CD4-positive, alpha-beta T cell (primary cell): ENCODE measurements at regions of chr1 and their contacts with region 1.

Region 1: DNA sequence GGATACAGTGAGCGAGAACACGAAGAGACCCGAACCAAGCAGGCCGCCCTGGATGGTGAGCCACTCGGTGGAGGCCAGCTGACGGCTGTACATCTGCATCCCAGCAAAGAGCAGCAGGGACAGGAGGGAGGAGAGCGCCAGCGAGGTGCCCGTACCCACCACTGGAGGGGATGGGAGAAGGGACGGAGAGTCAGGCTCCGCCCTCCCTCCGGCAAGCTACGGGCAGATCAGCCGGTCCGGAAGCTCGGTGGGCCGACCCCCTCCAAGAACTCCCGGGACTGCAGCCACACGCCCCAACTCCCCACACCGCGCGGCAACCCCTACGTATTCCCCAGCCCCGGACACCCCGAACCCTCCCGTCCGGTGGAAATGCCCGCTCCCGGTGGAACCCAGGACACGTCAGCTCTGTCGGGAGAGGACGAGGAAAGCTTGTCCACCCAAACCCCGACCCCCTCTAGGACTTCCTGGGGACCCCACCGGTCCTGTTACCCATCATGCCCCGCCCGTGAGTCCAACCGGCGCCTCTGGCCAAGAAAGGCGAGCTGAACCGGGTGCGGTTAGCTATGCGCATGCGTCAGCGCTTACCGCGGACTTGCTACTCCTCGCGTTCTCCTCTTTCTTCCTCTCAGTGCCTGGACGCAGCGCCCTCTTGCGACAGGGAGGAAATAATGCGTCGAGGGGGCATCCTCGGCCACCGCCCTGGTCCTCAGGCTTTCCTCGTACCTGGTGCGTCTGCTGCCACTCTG is at the start of gene KRTCAP2:
- DNase-seq: peak; percentile 90 to 97 (median 92)
- ATAC-seq: peak; percentile 80
- H3K4me3 ChIP-seq: peak within 1 kb of the TSS; percentile 77
- H3K4me3 Mint-ChIP-seq: peak within 1 kb of the TSS; percentile 100
- H3K27ac ChIP-seq: peak within 1 kb of the TSS; percentile 89 to 91
- H3K27ac Mint-ChIP-seq: peak within 1 kb of the TSS; percentile 95
- H3K4me1 ChIP-seq: peaks cover 58% of the 10 kb centered on the region
- H3K4me1 Mint-ChIP-seq: peaks cover 55% of the 10 kb centered on the region
- H3K27me3 ChIP-seq: no peaks in the 10 kb centered on the region
- H3K27me3 Mint-ChIP-seq: no peaks in the 10 kb centered on the region
- CTCF ChIP-seq: peak; percentile 84
- total RNA-seq, gene KRTCAP2: 77.8 TPM

Region 2: GRCh38 chr1:154992721-154993571 is 180.0 kb before region 1 on chr1:
- CTCF ChIA-PET with region 1: no interaction called
- POLR2A ChIA-PET with region 1: no interaction called
- intact Hi-C with region 1: no loop called
- DNase-seq: no peak
- ATAC-seq: no peak
- H3K4me3 ChIP-seq: no peak overlapping the region
- H3K4me3 Mint-ChIP-seq: no peak overlapping the region
- H3K27ac ChIP-seq: no peak overlapping the region
- H3K27ac Mint-ChIP-seq: no peak overlapping the region
- H3K4me1 ChIP-seq: peaks cover 33% of the 10 kb centered on the region
- H3K4me1 Mint-ChIP-seq: peaks cover 33% of the 10 kb centered on the region
- H3K27me3 ChIP-seq: no peaks in the 10 kb centered on the region
- H3K27me3 Mint-ChIP-seq: no peaks in the 10 kb centered on the region
- CTCF ChIP-seq: no peak

Region 3: DNA sequence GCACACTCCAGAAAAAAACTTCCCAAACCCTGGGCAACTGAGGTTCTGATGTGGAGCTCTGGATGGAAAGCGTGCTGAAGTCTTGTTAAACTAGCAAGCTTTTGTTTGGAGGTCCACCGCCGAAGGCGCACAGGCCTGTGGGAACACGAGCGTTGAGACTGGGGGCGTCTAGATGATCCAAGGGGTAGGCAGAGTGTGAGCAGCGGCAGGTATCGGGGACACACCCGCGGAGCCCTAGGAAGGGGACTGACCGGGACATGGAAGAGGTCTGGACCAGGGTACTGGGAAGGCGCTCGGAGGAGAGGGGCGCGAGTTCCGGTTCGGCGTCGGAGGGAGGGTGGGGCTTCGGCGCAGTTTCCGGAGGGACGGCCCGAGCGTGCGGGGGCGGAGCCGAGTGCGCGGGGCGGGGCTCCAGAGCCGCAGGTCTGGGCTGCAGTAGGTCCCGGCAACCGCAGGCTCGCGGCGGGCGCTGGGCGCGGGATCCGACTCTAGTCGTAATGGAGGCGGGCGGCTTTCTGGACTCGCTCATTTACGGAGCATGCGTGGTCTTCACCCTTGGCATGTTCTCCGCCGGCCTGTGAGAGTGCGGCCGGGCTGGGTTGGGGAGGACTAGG is 37.4 kb before region 1 on chr1 and contains the start of gene SLC50A1:
- CTCF ChIA-PET with region 1: interaction called, 7 read pairs
- POLR2A ChIA-PET with region 1: interaction called, 7 read pairs
- intact Hi-C with region 1: loop called in 1 of 2 experiments (anchors 1 kb)
- DNase-seq: peak; percentile 83 to 97 (median 89)
- ATAC-seq: peak; percentile 85
- H3K4me3 ChIP-seq: peak within 1 kb of the TSS; percentile 97
- H3K4me3 Mint-ChIP-seq: peak within 1 kb of the TSS; percentile 95
- H3K27ac ChIP-seq: peak within 1 kb of the TSS; percentile 98 to 99
- H3K27ac Mint-ChIP-seq: peak within 1 kb of the TSS; percentile 98
- H3K4me1 ChIP-seq: peaks cover 47% of the 10 kb centered on the region
- H3K4me1 Mint-ChIP-seq: peaks cover 54% of the 10 kb centered on the region
- H3K27me3 ChIP-seq: no peaks in the 10 kb centered on the region
- H3K27me3 Mint-ChIP-seq: peaks cover 3% of the 10 kb centered on the region
- CTCF ChIP-seq: no peak
- total RNA-seq, gene SLC50A1: 10.2 to 12.5 TPM

Region 4: GRCh38 chr1:155227261-155228095 is 54.6 kb after region 1 on chr1:
- CTCF ChIA-PET with region 1: interaction called, 21 read pairs
- POLR2A ChIA-PET with region 1: interaction called, 12 read pairs
- intact Hi-C with region 1: loop called (anchors 1 kb)
- DNase-seq: peak; percentile 96 to 100 (median 98)
- ATAC-seq: peak; percentile 93
- H3K4me3 ChIP-seq: peak overlapping the region; percentile 75
- H3K4me3 Mint-ChIP-seq: peak overlapping the region; percentile 72
- H3K27ac ChIP-seq: peak overlapping the region; percentile 82 to 87
- H3K27ac Mint-ChIP-seq: peak overlapping the region; percentile 74
- H3K4me1 ChIP-seq: peaks cover 25% of the 10 kb centered on the region
- H3K4me1 Mint-ChIP-seq: peaks cover 26% of the 10 kb centered on the region
- H3K27me3 ChIP-seq: no peaks in the 10 kb centered on the region
- H3K27me3 Mint-ChIP-seq: no peaks in the 10 kb centered on the region
- CTCF ChIP-seq: no peak

Region 5: DNA sequence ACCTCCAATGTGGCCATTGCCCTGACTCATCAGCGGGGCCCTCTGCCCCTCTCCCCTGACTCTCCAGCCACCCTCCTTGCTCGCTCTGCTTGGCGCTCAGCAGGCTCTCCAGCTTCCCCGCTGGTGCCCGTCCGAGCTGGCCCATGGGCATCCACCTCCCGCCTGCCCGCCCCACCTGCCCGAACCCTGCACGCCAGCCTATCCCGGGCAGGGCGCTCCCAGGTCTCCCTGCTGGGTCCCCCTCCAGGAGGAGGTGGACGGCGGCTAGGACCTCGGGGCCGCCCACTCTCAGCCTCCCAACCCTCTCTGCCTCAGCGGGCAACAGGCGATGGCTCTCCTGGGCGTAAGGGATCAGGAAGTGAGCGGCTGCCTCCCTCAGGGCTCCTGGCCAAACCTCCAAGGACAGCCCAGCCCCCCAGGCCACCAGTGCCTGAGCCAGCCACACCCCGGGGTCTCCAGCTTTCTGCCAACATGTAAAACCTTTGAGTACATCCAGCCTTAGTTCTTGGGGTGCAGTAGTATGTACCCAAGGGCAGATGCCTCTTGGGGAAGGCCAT is 115.2 kb after region 1 on chr1:
- CTCF ChIA-PET with region 1: no interaction called
- POLR2A ChIA-PET with region 1: no interaction called
- intact Hi-C with region 1: no loop called
- DNase-seq: no peak
- ATAC-seq: no peak
- H3K4me3 ChIP-seq: no peak overlapping the region
- H3K4me3 Mint-ChIP-seq: no peak overlapping the region
- H3K27ac ChIP-seq: no peak overlapping the region
- H3K27ac Mint-ChIP-seq: no peak overlapping the region
- H3K4me1 ChIP-seq: no peaks in the 10 kb centered on the region
- H3K4me1 Mint-ChIP-seq: no peaks in the 10 kb centered on the region
- H3K27me3 ChIP-seq: peaks cover 0 to under 1% of the 10 kb centered on the region in 2 experiments
- H3K27me3 Mint-ChIP-seq: no peaks in the 10 kb centered on the region
- CTCF ChIP-seq: no peak

Region 6: GRCh38 chr1:155323798-155324610 is 151.1 kb after region 1 on chr1:
- CTCF ChIA-PET with region 1: interaction called, 7 read pairs
- POLR2A ChIA-PET with region 1: interaction called, 3 read pairs
- intact Hi-C with region 1: loop called in 1 of 2 experiments (anchors 5 kb)
- DNase-seq: peak; percentile 69 to 94 (median 80)
- ATAC-seq: peak; percentile 79
- H3K4me3 ChIP-seq: peak overlapping the region; percentile 100
- H3K4me3 Mint-ChIP-seq: peak overlapping the region; percentile 92
- H3K27ac ChIP-seq: peak overlapping the region; percentile 93 to 97
- H3K27ac Mint-ChIP-seq: peak overlapping the region; percentile 69
- H3K4me1 ChIP-seq: peaks cover 49% of the 10 kb centered on the region
- H3K4me1 Mint-ChIP-seq: peaks cover 46% of the 10 kb centered on the region
- H3K27me3 ChIP-seq: no peaks in the 10 kb centered on the region
- H3K27me3 Mint-ChIP-seq: no peaks in the 10 kb centered on the region
- CTCF ChIP-seq: no peak